PC-9 (cell line): ENCODE measurements at regions of chr5 and their contacts with region 1.

Region 1: DNA sequence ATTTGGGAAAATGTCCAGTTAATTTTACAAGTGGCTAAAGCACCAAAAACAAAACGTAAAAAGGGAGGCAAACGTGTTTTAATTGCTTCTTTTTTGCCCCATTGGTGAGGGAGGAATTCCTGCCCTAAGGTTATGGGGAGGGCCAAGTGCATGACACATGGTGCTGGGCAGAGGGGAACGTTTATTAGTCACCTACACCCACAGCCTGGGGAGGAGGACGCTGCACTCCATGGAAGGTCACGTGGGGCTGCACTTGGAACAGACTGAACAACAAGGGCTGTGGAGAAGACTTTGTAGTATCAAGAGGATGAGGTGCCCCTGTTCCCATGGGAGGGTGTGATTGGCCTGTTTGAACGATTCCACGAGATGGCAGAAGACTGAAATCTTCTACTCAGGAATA is 13.7 kb upstream of the ADAMTS16 start:
- DNase-seq: peak; percentile 71 to 83
- H3K4me3 ChIP-seq: no peak overlapping the region
- H3K27ac ChIP-seq: no peak overlapping the region
- H3K4me1 ChIP-seq: peaks cover 12% of the 10 kb centered on the region
- H3K27me3 ChIP-seq: peaks cover 7% of the 10 kb centered on the region; the same call in 1 of the 2 replicates
- CTCF ChIP-seq: no peak

Region 2: DNA sequence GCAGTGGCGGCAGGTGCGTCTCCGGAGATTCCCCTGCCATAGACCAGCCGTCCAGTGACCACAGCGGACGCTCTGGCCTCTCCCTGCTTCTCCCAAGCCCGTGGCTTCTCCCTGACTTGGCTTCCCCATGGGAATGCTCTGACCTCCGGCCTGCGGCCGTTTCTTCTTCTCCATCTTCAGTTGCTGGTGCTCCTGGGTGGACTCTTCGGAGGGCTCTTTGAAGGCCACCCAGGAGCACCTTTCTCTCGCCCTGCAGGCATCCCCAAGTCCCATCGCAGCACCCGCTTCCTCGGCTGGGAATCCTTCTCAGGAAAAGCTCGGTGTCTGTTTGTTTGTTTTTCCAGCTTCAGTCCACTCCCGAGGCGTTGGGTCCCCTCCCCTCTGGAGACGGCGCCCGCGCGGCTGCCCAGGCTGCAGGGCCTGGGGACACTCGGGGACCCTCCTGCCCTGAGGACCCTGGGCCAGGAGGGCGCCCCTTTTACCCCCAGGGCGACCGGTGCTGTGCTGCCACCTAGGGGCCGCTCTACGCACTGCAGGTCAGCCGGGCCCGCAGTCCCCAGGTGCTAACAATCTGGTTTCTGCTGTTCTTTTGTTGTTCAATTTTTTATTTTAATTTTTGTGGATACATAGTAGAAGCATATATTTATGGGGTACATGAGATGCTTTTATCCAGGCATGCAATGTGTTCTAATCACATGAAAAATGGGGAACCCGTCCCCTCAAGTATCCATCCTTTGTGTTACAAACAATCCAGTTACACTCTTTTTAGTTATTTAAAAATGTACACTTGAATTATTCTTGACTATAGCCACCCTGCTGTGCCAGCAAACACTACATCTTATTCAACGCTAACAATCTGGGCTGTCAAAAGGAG is 184.2 kb before region 1 on chr5:
- CTCF ChIA-PET with region 1: no interaction called
- POLR2A ChIA-PET with region 1: no interaction called
- intact Hi-C with region 1: loop called (anchors 10 kb)
- DNase-seq: peak in 1 of 2 experiments; percentile 51
- H3K4me3 ChIP-seq: no peak overlapping the region
- H3K27ac ChIP-seq: no peak overlapping the region
- H3K4me1 ChIP-seq: no peaks in the 10 kb centered on the region
- H3K27me3 ChIP-seq: peaks cover 82% of the 10 kb centered on the region
- CTCF ChIP-seq: peak; percentile 97

Region 3: DNA sequence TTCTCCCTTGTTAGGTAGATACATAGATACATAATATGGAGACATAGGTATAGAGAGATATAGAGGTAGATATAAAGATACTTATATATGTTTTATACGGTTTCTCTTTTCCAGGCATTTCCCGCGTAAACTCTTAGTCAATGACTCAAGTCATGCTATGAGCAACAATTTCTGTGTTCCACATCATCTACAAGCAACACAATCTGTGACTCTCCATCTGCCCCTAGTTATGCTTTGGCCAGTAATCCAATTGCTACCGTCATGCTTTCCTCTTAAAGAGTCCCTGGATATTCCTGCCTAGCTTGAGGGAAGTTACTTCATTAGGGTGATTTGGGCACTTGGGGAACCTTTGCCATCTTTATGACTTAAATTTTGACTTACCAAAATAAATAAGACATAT is 115.3 kb before region 1 on chr5:
- CTCF ChIA-PET with region 1: no interaction called
- POLR2A ChIA-PET with region 1: no interaction called
- intact Hi-C with region 1: no loop called
- DNase-seq: no peak
- H3K4me3 ChIP-seq: no peak overlapping the region
- H3K27ac ChIP-seq: no peak overlapping the region
- H3K4me1 ChIP-seq: no peaks in the 10 kb centered on the region
- H3K27me3 ChIP-seq: peaks cover 61% of the 10 kb centered on the region
- CTCF ChIP-seq: no peak